Activated naive CD4-positive, alpha-beta T cell treated with anti-CD3 and anti-CD28 coated beads for 36 hours (primary cell): ENCODE measurements at regions of chr1 and their contacts with region 1.

Region 1: GRCh38 chr1:200620273-200621131 is at the start of gene KIF14:
- DNase-seq: peak; percentile 95
- H3K4me3 Mint-ChIP-seq: peak within 1 kb of the TSS; percentile 92
- H3K27ac Mint-ChIP-seq: peak within 1 kb of the TSS; percentile 66
- H3K4me1 Mint-ChIP-seq: peaks cover 16% of the 10 kb centered on the region
- H3K27me3 Mint-ChIP-seq: peaks cover 2% of the 10 kb centered on the region
- total RNA-seq, gene KIF14: 16.4 to 16.9 TPM

Region 2: GRCh38 chr1:200634261-200635122 is 14.0 kb after region 1 on chr1:
- CTCF ChIA-PET with region 1: interaction called, 11 read pairs
- intact Hi-C with region 1: no loop called
- DNase-seq: peak; percentile 21
- H3K4me3 Mint-ChIP-seq: no peak overlapping the region
- H3K27ac Mint-ChIP-seq: no peak overlapping the region
- H3K4me1 Mint-ChIP-seq: no peaks in the 10 kb centered on the region
- H3K27me3 Mint-ChIP-seq: no peaks in the 10 kb centered on the region

Region 3: DNA sequence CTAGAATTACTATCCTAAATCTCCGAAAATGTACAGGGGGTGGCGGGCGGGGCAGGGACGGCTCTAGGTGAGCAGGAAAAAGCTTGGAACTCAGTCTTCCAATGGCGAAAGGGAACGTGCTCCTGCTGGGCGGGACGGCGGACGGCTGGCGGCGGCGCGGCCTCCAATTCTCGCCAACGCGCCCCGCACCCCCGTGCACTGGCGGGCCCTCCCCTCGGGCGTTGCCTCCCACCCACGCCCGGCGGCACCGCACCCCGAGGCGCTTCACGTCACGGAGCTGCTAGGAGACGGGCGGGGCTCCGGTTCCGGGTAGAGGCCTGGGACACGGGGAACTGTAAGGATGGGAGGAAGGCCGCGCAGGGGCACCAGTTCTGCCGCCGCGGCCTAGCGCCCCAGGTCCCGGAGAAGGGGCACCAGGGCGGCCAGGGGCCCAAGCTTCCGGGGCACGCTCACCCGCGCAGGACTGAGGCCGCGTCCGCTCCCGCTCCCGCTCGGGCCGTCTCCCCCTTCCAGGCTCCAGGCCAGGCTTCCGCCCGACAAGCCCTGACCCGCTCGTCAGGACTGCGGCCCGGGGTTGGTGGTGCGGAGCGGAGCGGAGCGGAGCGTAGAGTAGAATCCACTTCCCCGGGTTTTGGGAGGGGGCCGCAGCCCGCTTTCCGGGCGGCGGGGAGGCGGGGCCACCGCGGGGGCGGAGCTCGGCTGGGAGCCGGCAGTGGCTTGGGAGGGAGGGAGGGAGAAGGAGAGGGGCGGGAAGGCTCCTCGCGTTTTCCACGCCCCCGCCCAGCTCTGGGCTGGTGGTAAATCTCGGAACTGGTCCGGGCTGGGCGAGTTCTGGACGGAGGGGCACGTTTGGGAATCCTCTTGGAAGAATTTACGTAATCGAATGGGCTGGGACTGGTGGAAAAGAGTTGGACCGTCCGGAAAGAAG is 49.1 kb after region 1 on chr1 and contains the start of gene DDX59:
- CTCF ChIA-PET with region 1: interaction called, 47 read pairs
- intact Hi-C with region 1: loop called (anchors 1 kb)
- DNase-seq: peak; percentile 93
- H3K4me3 Mint-ChIP-seq: peak within 1 kb of the TSS; percentile 100
- H3K27ac Mint-ChIP-seq: peak within 1 kb of the TSS; percentile 99
- H3K4me1 Mint-ChIP-seq: peaks cover 35% of the 10 kb centered on the region
- H3K27me3 Mint-ChIP-seq: no peaks in the 10 kb centered on the region
- total RNA-seq, gene DDX59: 20.9 to 22.7 TPM

Region 4: GRCh38 chr1:200802865-200803512 is 182.5 kb after region 1 on chr1:
- CTCF ChIA-PET with region 1: interaction called, 97 read pairs
- intact Hi-C with region 1: loop called (anchors 1 kb)
- DNase-seq: peak; percentile 90
- H3K4me3 Mint-ChIP-seq: no peak overlapping the region
- H3K27ac Mint-ChIP-seq: no peak overlapping the region
- H3K4me1 Mint-ChIP-seq: peaks cover 4% of the 10 kb centered on the region
- H3K27me3 Mint-ChIP-seq: no peaks in the 10 kb centered on the region

Region 5: DNA sequence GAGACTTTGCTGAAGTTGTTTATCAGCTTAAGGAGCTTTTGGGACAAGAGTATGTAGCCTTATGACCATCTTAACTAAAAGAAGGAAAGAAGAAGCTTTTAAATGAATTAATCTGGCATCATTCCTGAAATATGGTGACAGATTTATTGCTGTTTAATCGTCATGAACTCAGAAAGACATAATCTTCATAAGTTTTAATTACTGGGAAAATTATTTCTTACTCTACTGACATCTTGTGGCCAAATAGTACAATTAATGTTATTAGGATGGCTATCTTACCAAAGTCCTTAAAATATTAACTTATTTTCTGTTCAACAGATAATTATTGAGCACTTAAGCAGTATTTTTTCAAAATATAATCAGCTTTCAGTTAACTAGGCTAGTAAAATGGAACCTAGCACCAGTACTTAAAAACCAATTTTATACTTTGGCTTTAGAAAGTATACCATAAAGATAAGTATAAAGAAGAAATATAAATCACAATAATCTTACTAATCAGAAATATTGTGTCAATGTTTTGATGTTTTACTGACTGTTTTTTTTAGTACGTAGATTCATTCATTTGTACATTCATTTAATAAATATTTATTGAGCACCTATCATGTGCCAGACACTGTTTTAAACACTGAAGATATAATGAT is 217.5 kb after region 1 on chr1:
- CTCF ChIA-PET with region 1: interaction called, 4 read pairs
- intact Hi-C with region 1: loop called (anchors 1 kb)
- DNase-seq: no peak
- H3K4me3 Mint-ChIP-seq: no peak overlapping the region
- H3K27ac Mint-ChIP-seq: no peak overlapping the region
- H3K4me1 Mint-ChIP-seq: no peaks in the 10 kb centered on the region
- H3K27me3 Mint-ChIP-seq: no peaks in the 10 kb centered on the region

Region 6: DNA sequence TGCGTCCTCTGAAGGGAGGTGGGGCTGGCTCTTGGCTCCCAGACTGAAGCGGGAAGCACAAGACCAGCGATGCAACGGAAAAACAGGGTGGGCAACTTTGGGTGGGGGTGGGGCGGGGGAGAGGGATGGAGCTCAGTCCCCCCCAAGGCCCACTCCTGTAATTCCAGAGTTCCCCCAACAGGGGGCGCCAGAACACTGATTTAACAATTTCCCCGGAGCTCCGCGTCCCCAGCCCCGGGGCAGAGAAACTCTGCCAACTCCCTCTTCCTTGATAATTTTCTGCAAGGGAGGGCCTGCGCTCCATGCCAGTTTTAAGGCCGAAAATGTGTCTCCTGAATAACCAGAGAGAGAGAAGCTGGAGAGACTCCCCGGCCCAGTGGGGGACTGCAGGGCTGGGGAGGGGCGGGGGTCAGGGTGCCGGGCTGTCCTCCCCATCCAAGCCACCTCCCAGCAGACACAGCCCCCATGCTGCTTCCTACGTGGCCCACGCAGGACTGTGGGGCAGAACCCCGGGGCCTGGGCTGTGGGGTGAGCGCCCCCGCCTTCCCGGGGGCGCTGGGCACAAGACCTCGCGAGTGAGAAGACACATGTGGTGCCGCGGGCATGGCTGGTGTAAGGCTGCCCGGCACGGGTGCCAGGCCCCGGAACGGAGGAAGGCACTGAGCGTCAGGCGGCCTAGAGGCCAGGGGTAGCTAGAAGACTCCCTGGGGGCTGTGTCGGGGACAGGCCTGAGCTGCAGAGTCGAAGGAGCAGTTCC is 351.6 kb after region 1 on chr1:
- CTCF ChIA-PET with region 1: interaction called, 7 read pairs
- intact Hi-C with region 1: loop called (anchors 5 kb)
- DNase-seq: peak; percentile 76
- H3K4me3 Mint-ChIP-seq: no peak overlapping the region
- H3K27ac Mint-ChIP-seq: no peak overlapping the region
- H3K4me1 Mint-ChIP-seq: peaks cover 4% of the 10 kb centered on the region
- H3K27me3 Mint-ChIP-seq: no peaks in the 10 kb centered on the region

Region 7: GRCh38 chr1:201114236-201115131 is 494.0 kb after region 1 on chr1:
- CTCF ChIA-PET with region 1: interaction called, 3 read pairs
- intact Hi-C with region 1: loop called (anchors 1 kb)
- DNase-seq: peak; percentile 89
- H3K4me3 Mint-ChIP-seq: peak overlapping the region; percentile 81
- H3K27ac Mint-ChIP-seq: no peak overlapping the region
- H3K4me1 Mint-ChIP-seq: peaks cover 2% of the 10 kb centered on the region
- H3K27me3 Mint-ChIP-seq: peaks cover 2% of the 10 kb centered on the region